CD14-positive monocyte (primary cell): ENCODE measurements at regions of chr2 and their contacts with region 1.

Region 1: DNA sequence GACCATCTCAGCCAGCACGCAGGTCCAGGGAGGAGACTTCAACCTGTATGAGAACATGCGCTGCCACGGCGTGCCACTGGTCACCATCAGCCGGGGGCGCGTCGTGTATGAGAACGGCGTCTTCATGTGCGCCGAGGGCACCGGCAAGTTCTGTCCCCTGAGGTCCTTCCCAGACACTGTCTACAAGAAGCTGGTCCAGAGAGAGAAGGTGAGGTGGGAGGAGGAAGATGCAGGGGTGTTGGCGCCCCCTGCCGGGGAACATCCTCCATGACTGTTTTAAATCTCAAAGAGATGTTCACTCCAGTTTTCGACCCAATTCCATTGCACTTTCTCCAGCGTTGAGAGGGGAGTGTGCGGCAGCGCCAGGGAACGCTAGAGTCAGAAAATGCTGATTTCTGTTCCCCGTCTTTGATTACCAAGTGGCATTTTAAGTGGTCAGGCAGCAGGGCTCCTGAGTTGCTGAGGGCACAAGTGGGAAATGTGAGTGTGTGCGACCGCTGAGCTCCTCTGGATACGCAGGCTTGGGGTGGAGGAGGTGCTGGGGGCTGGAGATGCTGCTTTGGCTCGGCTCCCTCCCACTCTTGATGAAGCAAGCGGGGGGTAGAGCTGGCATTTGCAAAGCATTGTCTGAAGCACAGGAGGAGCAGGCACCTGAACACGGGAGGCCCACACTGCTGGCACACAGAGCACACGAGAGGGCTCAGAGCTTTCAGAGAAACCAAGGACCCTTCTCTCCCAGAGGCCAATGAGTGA is 27.7 kb upstream of the MAPRE3 start:
- DNase-seq: peak; percentile 37 to 48 (median 38)
- H3K4me3 ChIP-seq: no peak overlapping the region
- H3K4me3 Mint-ChIP-seq: peak overlapping the region in 1 of 2 donors; percentile 75
- H3K27ac ChIP-seq: no peak overlapping the region
- H3K27ac Mint-ChIP-seq: no peak overlapping the region
- H3K4me1 ChIP-seq: no peaks in the 10 kb centered on the region
- H3K4me1 Mint-ChIP-seq: no peaks in the 10 kb centered on the region
- H3K27me3 ChIP-seq: peaks cover 0 to 6% of the 10 kb centered on the region in 2 donors
- H3K27me3 Mint-ChIP-seq: peaks cover 8 to 31% (median 13%) of the 10 kb centered on the region in 3 donors
- CTCF ChIP-seq: peak; percentile 90

Region 2: GRCh38 chr2:26846328-26847306 is 96.1 kb before region 1 on chr2:
- intact Hi-C with region 1: loop called (anchors 1 to 2 kb)
- DNase-seq: peak; percentile 42 to 57 (median 49)
- H3K4me3 ChIP-seq: no peak overlapping the region
- H3K4me3 Mint-ChIP-seq: peak overlapping the region in 1 of 2 donors; percentile 67
- H3K27ac ChIP-seq: no peak overlapping the region
- H3K27ac Mint-ChIP-seq: no peak overlapping the region
- H3K4me1 ChIP-seq: peaks cover 16 to 25% of the 10 kb centered on the region in 2 donors
- H3K4me1 Mint-ChIP-seq: peaks cover 18% of the 10 kb centered on the region
- H3K27me3 ChIP-seq: peaks cover 52 to 65% of the 10 kb centered on the region in 2 donors
- H3K27me3 Mint-ChIP-seq: peaks cover 51 to 82% (median 66%) of the 10 kb centered on the region in 3 donors
- CTCF ChIP-seq: peak; percentile 85